GM10248 (cell line): ENCODE measurements at regions of chrX and their contacts with region 1.

Region 1: GRCh38 chrX:153456161-153456560 is 10.3 kb upstream of the TREX2 start:
- DNase-seq: no peak
- CTCF ChIP-seq: no peak

Region 2: GRCh38 chrX:153470435-153471363 is 14.5 kb after region 1 on chrX and contains the start of gene HAUS7:
- CTCF ChIA-PET with region 1: interaction called, 15 read pairs
- POLR2A ChIA-PET with region 1: no interaction called
- DNase-seq: peak; percentile 93
- CTCF ChIP-seq: peak; percentile 65